Aorta (tissue), 5 donors: ENCODE measurements at regions of chr16 and their contacts with region 1.

Region 1: GRCh38 chr16:20849587-20850390 is 43.5 kb downstream of the REXO5 start:
- DNase-seq: peak; percentile 75 to 87
- ATAC-seq: peak; percentile 85
- H3K4me3 ChIP-seq: no peak overlapping the region
- H3K27ac ChIP-seq: peak overlapping the region in 1 of 2 donors; percentile 92
- H3K4me1 ChIP-seq: peaks cover 10 to 16% of the 10 kb centered on the region in 2 donors
- H3K27me3 ChIP-seq: no peaks in the 10 kb centered on the region

Region 2: GRCh38 chr16:20611975-20612481 is 237.8 kb before region 1 on chr16:
- intact Hi-C with region 1: loop called in 1 of 2 experiments (anchors 5 kb)
- DNase-seq: peak; percentile 84 to 85
- ATAC-seq: peak; percentile 80
- H3K4me3 ChIP-seq: peak overlapping the region; percentile 10 to 11
- H3K27ac ChIP-seq: peak overlapping the region; percentile 87 to 99
- H3K4me1 ChIP-seq: peaks cover 0 to 2% of the 10 kb centered on the region in 2 donors
- H3K27me3 ChIP-seq: no peaks in the 10 kb centered on the region

Region 3: DNA sequence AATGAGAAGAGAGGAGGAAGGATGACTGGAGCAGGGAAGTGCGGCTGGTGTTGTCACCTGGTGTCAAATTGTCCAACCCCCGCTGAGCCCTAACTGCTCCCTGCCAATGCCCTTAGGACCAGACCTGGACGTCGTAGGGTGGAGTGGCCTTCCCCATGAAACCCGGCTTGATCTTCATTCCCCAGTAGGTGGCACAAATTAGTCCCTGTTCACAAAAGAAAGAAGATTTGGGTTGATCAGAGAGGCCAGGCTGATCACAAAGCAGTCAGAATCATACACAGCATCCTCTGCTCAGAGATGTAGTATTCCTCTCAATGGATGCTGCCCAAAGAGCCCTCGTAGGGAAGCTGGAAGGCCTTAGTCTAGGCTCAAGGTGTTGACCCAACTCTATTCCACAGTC is 212.5 kb before region 1 on chr16:
- intact Hi-C with region 1: no loop called
- DNase-seq: no peak
- ATAC-seq: no peak
- H3K4me3 ChIP-seq: no peak overlapping the region
- H3K27ac ChIP-seq: no peak overlapping the region
- H3K4me1 ChIP-seq: no peaks in the 10 kb centered on the region
- H3K27me3 ChIP-seq: no peaks in the 10 kb centered on the region

Region 4: GRCh38 chr16:20866145-20866772 is 16.5 kb after region 1 on chr16:
- intact Hi-C with region 1: no loop called
- DNase-seq: peak; percentile 76 to 82
- ATAC-seq: peak; percentile 28
- H3K4me3 ChIP-seq: no peak overlapping the region
- H3K27ac ChIP-seq: peak overlapping the region; percentile 12 to 79
- H3K4me1 ChIP-seq: peaks cover 9 to 27% of the 10 kb centered on the region in 2 donors
- H3K27me3 ChIP-seq: no peaks in the 10 kb centered on the region

Region 5: DNA sequence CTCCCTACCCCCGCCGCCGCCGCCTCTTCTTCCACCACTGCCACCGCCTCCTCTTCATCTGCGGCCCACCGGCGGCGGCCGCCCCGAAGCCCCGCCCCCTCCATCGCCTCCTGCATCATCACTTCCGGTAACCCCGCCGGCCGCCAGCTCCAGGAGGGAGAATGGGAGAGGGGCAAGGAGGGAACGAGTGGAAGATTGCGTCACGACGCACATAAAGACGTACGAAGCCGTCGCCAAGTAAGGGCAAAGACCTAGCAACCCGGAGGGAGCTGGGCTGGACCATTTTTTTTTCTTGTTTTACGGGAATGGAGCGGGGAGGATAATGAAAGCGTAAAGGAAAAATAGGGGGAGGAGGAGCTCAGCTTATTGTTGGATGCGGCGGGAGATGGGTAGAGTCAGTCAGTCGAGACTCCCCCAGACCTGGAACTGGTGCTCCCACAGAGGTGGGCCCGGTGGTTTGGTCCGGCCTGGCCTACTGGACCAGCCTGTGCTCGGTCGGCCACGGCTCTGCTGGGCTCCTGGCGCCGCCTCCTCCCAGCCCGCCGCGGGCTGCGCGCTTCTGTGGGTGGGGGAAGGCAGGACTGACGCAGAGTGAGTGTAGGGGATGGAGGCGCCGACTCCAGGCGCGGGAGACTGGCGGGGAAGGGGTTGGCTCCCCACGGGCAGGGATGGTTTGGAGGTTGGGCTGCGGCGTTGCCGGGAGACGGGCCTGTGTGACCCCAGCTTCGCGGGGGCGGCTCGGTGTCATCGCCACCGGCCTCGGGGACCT is 50.7 kb after region 1 on chr16 and contains the starts of genes DCUN1D3 and LYRM1:
- intact Hi-C with region 1: loop called (anchors 2 to 5 kb)
- DNase-seq: peak; percentile 97 to 98
- ATAC-seq: peak; percentile 95
- H3K4me3 ChIP-seq: peak within 1 kb of the TSS; percentile 52 to 91
- H3K27ac ChIP-seq: peak within 1 kb of the TSS; percentile 82 to 91
- H3K4me1 ChIP-seq: peaks cover 4 to 25% of the 10 kb centered on the region in 2 donors
- H3K27me3 ChIP-seq: no peaks in the 10 kb centered on the region
- total RNA-seq, gene DCUN1D3: 29.5 to 54.5 TPM
- total RNA-seq, gene LYRM1: 18.1 to 24.3 TPM

Region 6: GRCh38 chr16:20910781-20911321 is 61.1 kb after region 1 on chr16:
- intact Hi-C with region 1: loop called in 1 of 2 experiments (anchors 5 kb)
- DNase-seq: no peak
- ATAC-seq: peak; percentile 59
- H3K4me3 ChIP-seq: no peak overlapping the region
- H3K27ac ChIP-seq: peak overlapping the region; percentile 67 to 92
- H3K4me1 ChIP-seq: peaks cover 5% of the 10 kb centered on the region in 2 donors
- H3K27me3 ChIP-seq: no peaks in the 10 kb centered on the region

Region 7: DNA sequence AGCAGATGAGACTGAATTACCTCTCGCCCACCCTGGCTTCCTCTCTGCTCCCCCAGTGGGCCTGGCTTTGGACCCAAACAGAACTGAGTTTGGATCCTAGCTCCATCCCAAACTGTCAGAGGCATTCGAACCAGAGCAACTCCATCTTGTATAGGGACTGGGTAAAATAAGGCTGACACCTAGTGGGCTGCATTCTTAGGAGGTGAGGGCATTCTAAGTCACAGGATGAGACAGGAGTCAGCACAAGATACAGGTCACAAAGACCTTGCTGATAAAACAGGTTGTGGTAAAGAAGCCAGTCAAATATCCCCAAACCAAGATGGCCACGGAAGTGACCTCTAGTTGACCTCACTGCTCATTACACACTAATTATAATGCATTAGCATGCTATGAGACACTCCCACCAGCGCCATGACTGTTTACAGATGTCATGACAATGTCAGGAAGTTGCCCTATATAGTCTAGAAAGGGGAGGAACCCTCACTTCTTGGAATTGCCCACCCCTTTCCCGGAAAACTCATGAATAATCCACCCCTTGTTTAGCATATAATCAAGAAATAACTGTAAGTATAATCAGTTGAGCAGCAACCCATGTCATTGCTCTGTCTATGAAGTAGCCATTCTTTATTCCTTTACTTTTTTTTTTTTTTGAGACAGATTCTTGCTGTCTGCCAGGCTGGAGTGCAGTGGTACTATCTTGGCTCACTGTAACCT is 95.2 kb after region 1 on chr16:
- intact Hi-C with region 1: loop called in 1 of 2 experiments (anchors 10 kb)
- DNase-seq: no peak
- ATAC-seq: no peak
- H3K4me3 ChIP-seq: no peak overlapping the region
- H3K27ac ChIP-seq: no peak overlapping the region
- H3K4me1 ChIP-seq: no peaks in the 10 kb centered on the region
- H3K27me3 ChIP-seq: no peaks in the 10 kb centered on the region

Region 8: DNA sequence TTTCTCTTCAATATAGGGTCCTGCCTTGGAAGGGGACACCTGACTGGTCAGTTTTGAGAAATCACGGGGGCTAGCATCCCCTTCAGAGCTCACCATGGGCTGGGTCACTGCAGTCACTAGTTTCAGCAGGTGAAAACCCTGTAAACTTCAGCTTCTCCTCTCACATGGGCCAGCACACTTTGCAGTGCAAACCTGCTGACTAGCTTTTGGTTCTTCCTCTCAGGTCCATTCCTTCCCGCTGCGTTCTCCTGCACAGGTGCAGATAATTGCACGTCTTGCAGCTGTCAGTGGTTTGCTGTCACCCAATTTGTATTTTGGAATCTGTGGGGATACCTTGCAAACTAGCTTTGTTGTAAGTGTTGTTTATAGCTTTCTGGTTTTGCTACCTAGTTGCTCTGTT is 145.9 kb after region 1 on chr16:
- intact Hi-C with region 1: no loop called
- DNase-seq: no peak
- ATAC-seq: no peak
- H3K4me3 ChIP-seq: no peak overlapping the region
- H3K27ac ChIP-seq: no peak overlapping the region
- H3K4me1 ChIP-seq: no peaks in the 10 kb centered on the region
- H3K27me3 ChIP-seq: no peaks in the 10 kb centered on the region

Region 9: GRCh38 chr16:21083729-21084268 is 234.0 kb after region 1 on chr16:
- intact Hi-C with region 1: loop called (anchors 2 kb)
- DNase-seq: peak; percentile 69 to 88
- ATAC-seq: peak; percentile 86
- H3K4me3 ChIP-seq: no peak overlapping the region
- H3K27ac ChIP-seq: no peak overlapping the region
- H3K4me1 ChIP-seq: no peaks in the 10 kb centered on the region
- H3K27me3 ChIP-seq: no peaks in the 10 kb centered on the region

Region 10: DNA sequence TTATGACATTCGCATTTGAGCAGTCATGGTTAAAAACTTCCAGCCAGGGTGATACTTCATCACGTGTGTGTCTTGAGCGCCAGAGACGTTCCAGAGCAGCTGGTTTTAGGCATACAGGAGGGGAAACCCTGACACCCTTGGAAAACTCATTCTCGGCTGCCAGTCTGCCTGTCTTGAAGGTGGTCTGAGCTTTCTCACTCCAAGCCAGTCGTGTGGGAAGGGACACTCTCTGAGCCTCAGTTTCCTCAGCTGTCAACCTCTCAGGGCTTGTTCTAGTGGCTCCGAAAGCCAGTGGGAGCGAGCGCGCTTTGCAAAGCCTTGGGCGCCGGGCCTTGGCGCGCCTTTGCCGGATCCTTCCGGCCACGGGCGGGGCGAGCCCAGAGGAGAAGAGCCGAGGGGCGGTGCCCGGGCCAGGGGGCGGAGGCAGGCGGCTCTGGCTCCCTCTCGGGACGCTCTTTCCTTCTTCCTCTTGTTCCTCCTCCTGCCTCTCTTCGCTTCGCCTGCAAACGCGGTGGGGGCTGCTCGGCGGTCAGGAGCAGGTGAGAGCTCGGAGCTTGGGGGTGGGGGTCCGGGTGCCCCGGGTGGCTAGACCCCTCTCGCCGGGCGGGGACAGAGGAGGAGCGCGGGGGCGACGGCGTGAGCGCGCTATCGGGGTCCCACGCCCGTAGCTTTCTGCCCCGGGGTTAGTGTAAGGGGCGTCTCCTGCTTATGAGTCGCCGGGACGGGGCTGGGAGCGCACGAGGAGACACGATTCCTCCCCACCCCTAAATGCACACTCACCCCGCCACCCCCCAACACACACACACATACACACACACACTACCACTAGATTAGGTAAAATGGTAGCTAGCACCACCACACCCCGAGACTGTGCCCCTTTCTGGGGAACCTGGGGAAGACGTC is 308.7 kb after region 1 on chr16 and contains the start of gene LDAF1:
- intact Hi-C with region 1: loop called (anchors 10 kb)
- DNase-seq: peak; percentile 92 to 96
- ATAC-seq: peak; percentile 95
- H3K4me3 ChIP-seq: peak within 1 kb of the TSS; percentile 78 to 94
- H3K27ac ChIP-seq: peak within 1 kb of the TSS; percentile 36 to 48
- H3K4me1 ChIP-seq: no peaks in the 10 kb centered on the region
- H3K27me3 ChIP-seq: no peaks in the 10 kb centered on the region
- total RNA-seq, gene LDAF1: 42.8 to 55.5 TPM